HEK293 (cell line): ENCODE measurements at regions of chr10 and their contacts with region 1.

Region 1: GRCh38 chr10:119207367-119207668 is at the start of gene GRK5:
- H3K4me3 ChIP-seq: peak within 1 kb of the TSS; percentile 73
- H3K27ac ChIP-seq: peak within 1 kb of the TSS; percentile 90
- H3K4me1 ChIP-seq: peaks cover 31% of the 10 kb centered on the region
- CTCF ChIP-seq: no peak

Region 2: GRCh38 chr10:118712930-118713634 is 494.2 kb before region 1 on chr10:
- CTCF ChIA-PET with region 1: no interaction called
- POLR2A ChIA-PET with region 1: no interaction called
- H3K4me3 ChIP-seq: no peak overlapping the region
- H3K27ac ChIP-seq: no peak overlapping the region
- H3K4me1 ChIP-seq: no peaks in the 10 kb centered on the region
- CTCF ChIP-seq: no peak

Region 3: DNA sequence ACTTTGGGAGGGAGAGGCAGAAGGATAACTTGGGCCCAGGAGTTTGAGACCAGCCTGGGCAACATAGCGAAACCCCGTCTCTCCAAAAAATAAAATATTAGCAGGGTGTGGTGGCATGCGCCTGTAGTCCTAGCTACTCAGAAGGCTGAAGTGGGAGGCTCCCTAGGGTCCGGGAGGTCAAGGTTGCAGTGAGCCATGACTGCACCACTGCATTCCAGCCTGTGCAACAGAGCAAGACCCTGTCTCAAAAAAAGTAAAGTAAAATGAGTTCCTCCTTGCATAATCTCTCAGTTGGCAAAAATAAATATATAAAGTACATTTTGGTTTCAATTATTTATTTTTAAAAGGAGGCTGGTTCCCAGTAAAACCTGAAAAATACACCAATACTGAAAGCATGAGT is 166.0 kb before region 1 on chr10:
- CTCF ChIA-PET with region 1: no interaction called
- POLR2A ChIA-PET with region 1: no interaction called
- H3K4me3 ChIP-seq: no peak overlapping the region
- H3K27ac ChIP-seq: no peak overlapping the region
- H3K4me1 ChIP-seq: no peaks in the 10 kb centered on the region
- CTCF ChIP-seq: no peak

Region 4: DNA sequence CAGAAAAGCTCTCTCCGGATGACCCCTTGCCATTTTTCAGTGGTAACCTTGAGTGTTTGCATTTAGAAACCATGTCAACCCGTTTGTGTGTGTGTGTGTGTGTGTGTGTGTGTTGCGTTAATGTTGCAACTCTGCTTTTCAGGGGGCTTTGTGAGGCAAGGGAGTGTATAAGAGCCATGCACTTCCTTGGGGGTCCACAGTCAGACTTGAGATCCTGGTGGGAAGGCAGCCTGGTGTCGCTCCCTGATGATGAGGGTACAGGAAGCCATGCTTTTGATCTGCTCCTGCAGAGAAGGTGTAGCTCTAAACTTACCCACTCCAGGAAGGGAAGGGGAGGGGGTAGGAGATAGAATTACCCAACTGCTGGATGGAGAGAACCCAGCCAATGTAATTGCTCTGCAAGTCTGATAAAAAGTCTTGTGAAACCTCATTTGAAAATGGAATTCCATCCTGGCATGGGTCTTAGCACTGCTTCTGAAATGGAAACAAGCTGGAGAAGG is 10.7 kb after region 1 on chr10:
- CTCF ChIA-PET with region 1: interaction called, 13 read pairs
- POLR2A ChIA-PET with region 1: interaction called, 4 read pairs
- H3K4me3 ChIP-seq: no peak overlapping the region
- H3K27ac ChIP-seq: no peak overlapping the region
- H3K4me1 ChIP-seq: peaks cover 20% of the 10 kb centered on the region
- CTCF ChIP-seq: no peak

Region 5: DNA sequence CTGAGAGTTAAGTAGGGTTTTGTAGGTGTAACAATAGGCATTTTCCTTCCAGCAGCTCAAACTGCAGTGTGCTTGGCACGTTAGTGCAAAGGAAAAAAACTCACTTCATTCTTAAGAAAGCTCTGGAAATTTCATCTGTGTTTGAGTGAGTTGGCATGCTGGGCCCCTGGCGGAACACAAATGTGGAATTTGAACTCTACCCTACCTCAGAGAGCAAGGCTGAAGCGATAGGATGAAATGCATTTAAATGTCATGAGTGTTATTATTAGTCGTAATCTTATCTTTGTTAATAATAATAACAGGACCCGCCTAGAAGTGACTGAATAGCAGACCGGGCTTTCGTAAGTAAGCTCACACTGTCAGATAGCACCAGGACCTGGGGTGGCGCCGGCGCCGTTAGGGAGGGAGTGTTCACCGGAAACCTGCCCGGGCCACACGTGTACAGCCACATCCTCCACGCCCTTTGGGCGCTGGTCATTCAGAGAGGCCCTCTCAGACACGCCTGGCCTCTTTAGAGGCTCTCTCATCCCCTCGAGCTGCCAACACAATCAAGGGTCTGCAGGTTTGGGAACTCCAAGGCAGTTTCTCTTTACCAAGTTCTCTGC is 63.5 kb after region 1 on chr10:
- CTCF ChIA-PET with region 1: interaction called, 14 read pairs
- POLR2A ChIA-PET with region 1: interaction called, 4 read pairs
- H3K4me3 ChIP-seq: no peak overlapping the region
- H3K27ac ChIP-seq: no peak overlapping the region
- H3K4me1 ChIP-seq: peaks cover 9% of the 10 kb centered on the region
- CTCF ChIP-seq: no peak

Region 6: DNA sequence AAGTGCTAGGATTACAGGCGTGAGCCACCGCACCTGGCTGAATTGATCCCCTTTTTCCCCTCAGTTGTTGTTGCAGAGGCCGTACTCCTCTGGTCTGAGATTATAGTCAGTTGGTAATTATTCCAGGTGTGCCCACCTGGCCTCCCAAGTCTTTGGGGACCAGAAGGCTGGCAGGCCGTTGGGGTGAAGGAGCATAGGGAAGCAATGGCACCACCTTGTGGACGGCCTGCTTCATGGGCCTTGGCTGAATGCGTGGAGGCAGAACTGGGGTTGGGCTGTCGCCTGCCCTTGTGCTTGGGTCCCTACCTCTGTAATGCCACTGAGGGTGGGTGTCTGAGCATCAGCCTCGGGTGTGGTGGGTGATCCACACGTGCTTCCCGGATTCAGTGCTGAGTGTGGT is 209.5 kb after region 1 on chr10:
- CTCF ChIA-PET with region 1: interaction called, 45 read pairs
- POLR2A ChIA-PET with region 1: interaction called, 4 read pairs
- H3K4me3 ChIP-seq: no peak overlapping the region
- H3K27ac ChIP-seq: no peak overlapping the region
- H3K4me1 ChIP-seq: no peaks in the 10 kb centered on the region
- CTCF ChIP-seq: peak; percentile 80